ENCODE measurements at regions of chr12 and their contacts with region 1.

Region 1: DNA sequence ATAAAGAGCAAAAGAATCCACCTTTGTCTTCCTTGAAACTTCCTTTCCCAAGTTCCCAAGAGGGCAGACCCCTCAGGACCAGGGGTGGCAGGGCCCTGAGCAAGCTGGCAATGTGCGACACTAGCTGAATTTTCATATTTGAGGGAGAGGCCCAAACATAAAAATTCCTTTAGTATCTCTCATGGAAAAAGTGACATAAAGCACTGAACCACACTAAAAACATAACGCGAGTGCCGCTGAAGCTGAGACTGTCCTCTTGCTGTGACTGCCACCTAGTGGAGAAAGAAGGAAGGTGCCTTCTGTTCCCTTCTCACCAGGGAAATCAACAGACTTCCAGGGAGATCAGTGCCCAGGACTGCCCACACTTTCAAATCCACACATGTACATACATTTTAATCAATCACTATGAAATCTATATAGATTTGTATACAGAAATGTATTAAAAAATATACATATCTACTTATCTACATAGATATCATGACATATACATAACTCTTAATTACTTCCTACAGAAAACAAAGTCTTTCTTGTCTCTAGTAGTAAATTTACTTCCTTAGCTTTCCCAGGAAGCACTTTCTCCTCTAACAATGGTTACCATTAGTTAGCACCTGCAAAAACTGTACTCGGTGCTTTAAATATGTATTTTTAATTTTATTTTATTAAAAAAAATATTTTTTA is 53.8 kb downstream of the SSH1 start:
- DNase-seq: peak; percentile 73
- H3K4me3 ChIP-seq: no peak overlapping the region
- H3K27me3 ChIP-seq: no peaks in the 10 kb centered on the region
- CTCF ChIP-seq: peak; percentile 91

Region 2: DNA sequence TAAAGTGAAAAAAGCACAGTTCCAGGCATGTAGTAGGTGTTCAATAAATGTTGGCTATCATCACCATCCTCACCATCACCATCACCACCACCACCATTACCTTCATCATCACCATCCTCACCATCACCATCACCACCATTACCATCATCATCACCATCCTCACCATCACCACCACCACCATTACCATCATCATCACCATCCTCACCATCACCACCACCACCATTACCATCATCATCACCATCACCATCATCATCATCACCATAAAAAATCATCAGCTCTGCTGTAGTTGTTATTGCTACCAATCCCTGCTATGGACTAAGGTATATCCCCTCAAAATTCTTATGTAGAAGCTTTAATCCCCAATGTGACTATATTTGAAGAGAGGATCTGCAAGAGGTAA is 226.1 kb before region 1 on chr12:
- CTCF ChIA-PET with region 1: interaction called, 3 read pairs
- POLR2A ChIA-PET with region 1: interaction called, 26 read pairs
- DNase-seq: no peak
- H3K4me3 ChIP-seq: no peak overlapping the region
- H3K27me3 ChIP-seq: no peaks in the 10 kb centered on the region; the same call in 1 of the 2 replicates
- CTCF ChIP-seq: no peak

Region 3: DNA sequence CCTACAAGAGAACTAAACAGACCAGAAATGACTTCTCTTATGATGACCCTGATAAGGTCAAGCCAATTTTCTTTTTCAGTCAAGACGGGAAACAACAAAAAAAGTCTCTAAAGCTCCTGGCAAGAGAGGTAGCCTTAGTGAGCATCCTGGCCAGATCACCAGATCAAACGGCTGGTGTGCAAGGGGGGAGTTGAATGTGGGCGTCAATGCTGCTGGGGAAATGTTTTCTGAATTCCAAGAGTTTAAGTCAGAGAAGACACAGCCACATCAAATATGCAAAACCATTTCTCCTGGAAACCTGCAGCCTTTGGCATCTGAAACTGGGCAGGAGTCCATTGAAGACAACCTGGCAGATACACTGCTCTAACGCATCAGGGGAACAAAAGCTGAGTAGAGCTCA is 153.9 kb before region 1 on chr12:
- CTCF ChIA-PET with region 1: interaction called, 11 read pairs
- POLR2A ChIA-PET with region 1: no interaction called
- DNase-seq: peak; percentile 71
- H3K4me3 ChIP-seq: no peak overlapping the region
- H3K27me3 ChIP-seq: no peaks in the 10 kb centered on the region
- CTCF ChIP-seq: no peak

Region 4: GRCh38 chr12:108826101-108826806 is 22.7 kb after region 1 on chr12:
- CTCF ChIA-PET with region 1: interaction called, 18 read pairs
- POLR2A ChIA-PET with region 1: no interaction called
- DNase-seq: peak; percentile 95
- H3K4me3 ChIP-seq: peak overlapping the region; percentile 10
- H3K27me3 ChIP-seq: no peaks in the 10 kb centered on the region
- CTCF ChIP-seq: peak; percentile 26; the same call in 1 of the 2 replicates

Region 5: DNA sequence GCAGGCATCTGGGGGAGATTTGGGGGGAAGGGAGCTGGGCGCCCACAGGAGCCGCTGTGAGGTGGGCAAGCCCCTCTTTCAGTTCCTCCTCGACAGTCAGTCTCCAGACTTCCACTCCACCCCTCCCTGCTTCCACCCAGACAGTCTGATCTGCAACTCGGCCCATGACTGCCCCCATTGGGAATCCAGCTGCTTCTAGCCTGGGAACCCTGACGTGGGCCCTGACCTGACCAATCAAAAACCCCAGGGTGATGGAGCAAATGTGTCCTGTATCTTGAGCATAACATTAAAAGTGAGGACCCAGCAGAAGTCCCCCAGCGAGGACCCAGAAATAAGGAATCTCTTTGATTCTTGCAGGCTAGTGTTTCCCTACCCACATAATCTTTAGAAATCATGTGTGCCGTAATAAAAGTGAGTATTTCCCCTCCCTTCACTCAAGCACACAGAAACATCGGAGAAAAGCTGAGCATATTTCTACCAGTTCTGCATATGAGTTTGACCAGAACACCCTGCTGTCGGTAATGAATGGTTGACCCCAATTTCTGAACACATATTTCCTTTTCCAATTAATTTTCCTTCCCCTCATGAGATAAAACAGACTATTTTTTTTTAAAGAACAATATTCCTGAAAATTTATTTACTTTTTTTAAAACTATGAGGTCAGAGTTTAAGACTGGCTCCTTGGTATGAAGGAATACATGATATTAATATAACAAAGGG is 47.4 kb after region 1 on chr12:
- CTCF ChIA-PET with region 1: interaction called, 12 read pairs
- POLR2A ChIA-PET with region 1: interaction called, 9 read pairs
- DNase-seq: no peak
- H3K4me3 ChIP-seq: no peak overlapping the region
- H3K27me3 ChIP-seq: no peaks in the 10 kb centered on the region
- CTCF ChIP-seq: no peak